IMR-90 (cell line): ENCODE measurements at regions of chr14 and their contacts with region 1.

Region 1: GRCh38 chr14:77885367-77885766 is 85.5 kb downstream of the ADCK1 start:
- DNase-seq: no peak
- ATAC-seq: no peak
- H3K4me3 ChIP-seq: no peak overlapping the region
- H3K27ac ChIP-seq: no peak overlapping the region
- H3K4me1 ChIP-seq: peaks cover 1% of the 10 kb centered on the region; the same call in 1 of the 2 replicates
- H3K27me3 ChIP-seq: no peaks in the 10 kb centered on the region
- CTCF ChIP-seq: no peak
- POLR2A ChIP-seq: no peak
- RAD21 ChIP-seq: no peak

Region 2: GRCh38 chr14:77931441-77931840 is 46.1 kb after region 1 on chr14:
- CTCF ChIA-PET with region 1: no interaction called
- POLR2A ChIA-PET with region 1: no interaction called
- dilution Hi-C with region 1: no loop called
- in situ Hi-C with region 1: no loop called
- intact Hi-C with region 1: loop called (anchors 1 kb)
- DNase-seq: no peak
- ATAC-seq: no peak
- H3K4me3 ChIP-seq: no peak overlapping the region
- H3K27ac ChIP-seq: no peak overlapping the region
- H3K4me1 ChIP-seq: no peaks in the 10 kb centered on the region
- H3K27me3 ChIP-seq: no peaks in the 10 kb centered on the region
- CTCF ChIP-seq: no peak
- POLR2A ChIP-seq: no peak
- RAD21 ChIP-seq: no peak

Region 3: DNA sequence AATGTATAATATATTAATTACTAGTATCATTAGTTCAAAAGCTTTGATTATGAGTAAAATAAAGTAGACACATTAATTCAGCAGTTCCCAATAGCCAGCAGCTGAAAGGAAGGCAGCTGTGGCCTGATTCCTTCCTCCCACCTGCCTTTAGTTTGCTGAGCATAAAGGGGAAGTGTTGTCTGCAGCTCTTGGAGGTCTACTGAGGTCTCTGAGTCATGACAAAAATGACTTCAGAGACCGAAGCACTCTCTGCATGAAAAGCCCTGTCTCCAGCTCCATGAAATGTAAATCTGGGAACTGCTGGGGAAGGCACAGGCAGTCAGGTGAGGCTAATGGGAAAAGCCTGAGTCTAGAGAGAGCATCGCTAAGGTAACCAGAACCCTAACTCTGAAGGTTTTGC is 450.2 kb after region 1 on chr14:
- CTCF ChIA-PET with region 1: no interaction called
- POLR2A ChIA-PET with region 1: no interaction called
- dilution Hi-C with region 1: no loop called
- in situ Hi-C with region 1: no loop called
- intact Hi-C with region 1: no loop called
- DNase-seq: no peak
- ATAC-seq: no peak
- H3K4me3 ChIP-seq: no peak overlapping the region
- H3K27ac ChIP-seq: no peak overlapping the region
- H3K4me1 ChIP-seq: no peaks in the 10 kb centered on the region
- H3K27me3 ChIP-seq: no peaks in the 10 kb centered on the region
- CTCF ChIP-seq: no peak
- POLR2A ChIP-seq: no peak
- RAD21 ChIP-seq: no peak